A549 (cell line): ENCODE measurements at regions of chr2 and their contacts with region 1.

Region 1: DNA sequence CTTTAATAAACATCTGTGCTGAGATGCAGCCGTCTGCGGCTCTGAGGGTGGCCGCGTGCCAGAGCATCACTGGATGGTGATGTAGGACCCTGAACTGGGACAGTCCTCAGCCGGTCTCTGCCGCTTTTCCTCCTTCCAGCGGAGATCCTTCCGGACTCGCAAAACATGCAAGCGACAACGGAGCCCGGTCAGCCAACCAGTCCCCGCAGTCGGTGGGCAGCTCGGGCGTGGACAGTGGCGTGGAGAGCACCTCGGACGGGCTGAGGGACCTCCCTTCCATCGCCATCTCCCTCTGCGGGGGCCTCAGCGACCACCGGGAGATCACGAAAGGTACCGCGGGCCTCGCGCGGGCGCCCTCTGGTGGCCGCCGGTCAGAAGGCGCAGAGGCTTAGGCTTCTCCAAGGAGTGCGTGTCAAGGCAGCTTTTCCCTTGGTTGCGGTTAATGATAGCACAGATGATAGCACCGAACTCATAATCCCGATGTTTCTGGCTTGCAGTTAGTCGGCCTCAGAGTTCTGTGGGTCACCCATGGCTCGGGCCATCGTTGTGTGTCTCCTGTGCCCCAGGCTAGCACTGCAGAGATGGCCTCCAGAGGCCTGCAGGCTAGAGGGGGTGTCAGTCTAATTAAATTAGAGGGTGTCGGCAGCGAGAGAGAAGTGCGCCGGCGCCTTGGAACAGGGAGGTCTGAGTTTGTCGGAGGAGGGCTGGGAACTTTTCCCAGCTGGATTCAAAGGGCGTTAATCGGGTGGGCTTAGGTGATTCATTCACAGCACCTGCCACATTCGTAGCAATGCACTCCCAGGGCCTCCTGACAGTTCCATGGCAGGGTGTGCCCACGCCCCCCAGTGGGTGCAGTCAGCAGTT is 38.5 kb downstream of the LPIN1 start:
- DNase-seq: peak; percentile 34 to 65
- ATAC-seq: peak; percentile 70 to 96; a peak in 5 of 6 replicates
- H3K4me3 ChIP-seq: no peak overlapping the region
- H3K27ac ChIP-seq: no peak overlapping the region
- H3K4me1 ChIP-seq: no peaks in the 10 kb centered on the region
- CTCF ChIP-seq: peak; percentile 92
- EP300 ChIP-seq: no peak
- POLR2A ChIP-seq: no peak
- RAD21 ChIP-seq: peak; percentile 27 to 64; a peak in 4 of 5 replicates

Region 2: DNA sequence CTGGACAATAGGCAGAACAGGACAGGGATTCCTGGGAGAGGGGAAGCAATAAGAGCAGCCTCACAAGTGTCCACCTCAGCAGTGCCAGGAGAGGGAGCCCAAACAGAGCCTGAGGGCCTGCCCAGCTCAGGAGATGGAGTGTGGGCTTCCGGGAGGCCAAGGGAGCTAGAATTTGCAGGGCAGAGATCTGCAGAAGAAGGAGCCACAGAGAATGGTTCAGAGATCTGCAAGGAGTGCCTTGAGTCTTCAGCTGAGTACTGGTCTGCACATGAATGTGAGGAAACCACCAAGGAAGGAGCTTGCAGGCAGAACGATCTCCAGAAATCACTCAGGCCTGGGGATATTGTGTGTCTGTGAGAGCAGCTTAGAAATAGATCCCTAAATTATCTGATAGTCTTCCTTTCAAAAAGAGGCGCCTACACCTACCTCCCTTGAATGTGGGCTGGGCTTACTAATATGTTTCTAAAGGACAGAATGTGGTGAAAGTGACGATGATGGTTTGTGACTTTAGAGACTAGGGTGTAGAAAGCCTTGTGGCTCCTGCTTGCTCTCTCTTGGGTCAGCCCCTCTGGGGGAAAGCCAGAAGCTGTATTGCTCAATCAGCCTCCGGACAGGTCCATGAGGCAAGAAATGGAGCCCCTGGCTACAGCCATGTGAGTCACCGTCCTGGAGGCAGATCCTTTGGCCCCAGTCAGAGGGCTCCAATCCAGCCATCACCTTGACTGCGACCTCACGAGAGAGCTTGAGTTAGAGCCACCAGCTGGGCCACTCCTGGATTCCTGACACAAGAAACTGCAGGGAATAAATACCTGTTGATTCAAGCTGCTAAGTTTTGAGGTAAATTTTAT is 46.2 kb before region 1 on chr2:
- CTCF ChIA-PET with region 1: interaction called, 66 read pairs
- POLR2A ChIA-PET with region 1: no interaction called
- DNase-seq: peak; percentile 40 to 67
- ATAC-seq: peak; percentile 91 to 95
- H3K4me3 ChIP-seq: no peak overlapping the region
- H3K27ac ChIP-seq: peak overlapping the region; percentile 4 to 66; a peak in 4 of 6 replicates
- H3K4me1 ChIP-seq: peaks cover 27% of the 10 kb centered on the region
- CTCF ChIP-seq: peak; percentile 49
- EP300 ChIP-seq: no peak
- POLR2A ChIP-seq: no peak
- RAD21 ChIP-seq: peak; percentile 54 to 72

Region 3: DNA sequence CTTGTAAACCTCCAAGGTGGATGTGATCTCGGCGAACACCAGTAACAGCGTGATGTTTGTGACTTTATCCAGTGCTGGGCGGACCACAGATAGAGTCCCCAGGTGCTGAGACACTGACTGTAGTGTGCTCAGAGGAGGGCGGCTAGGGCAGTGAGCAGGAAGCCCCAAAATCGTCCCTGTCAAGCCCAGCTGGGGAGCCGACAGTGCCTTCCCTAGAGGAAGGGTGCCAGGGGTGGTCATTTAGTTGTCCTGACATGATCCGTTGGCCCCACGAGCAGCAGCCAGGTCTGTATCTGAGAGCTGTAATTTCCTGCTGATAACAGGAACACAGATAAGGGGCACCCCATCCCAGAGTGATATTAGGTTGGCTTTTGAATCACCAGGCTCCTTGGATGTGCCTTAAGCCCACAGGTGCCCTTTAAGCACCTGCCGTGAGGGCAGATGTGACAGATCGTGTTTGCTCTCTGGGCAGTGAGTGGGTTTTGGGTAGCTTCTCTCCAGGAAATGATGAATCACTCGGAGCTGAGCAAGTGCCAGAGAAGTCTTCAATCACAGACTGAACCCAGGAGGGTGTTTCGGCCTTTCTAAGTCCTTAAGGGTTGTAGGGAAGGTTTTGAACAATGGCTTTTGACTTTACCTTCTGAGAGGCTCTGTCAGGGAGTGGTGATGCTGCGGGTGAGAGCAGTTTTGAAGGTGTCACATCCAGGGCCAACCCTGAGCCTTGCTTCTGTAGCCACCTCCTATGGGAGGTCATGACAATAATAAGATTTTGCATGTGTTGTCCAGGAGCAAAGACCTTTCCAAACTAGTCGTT is 30.9 kb before region 1 on chr2:
- CTCF ChIA-PET with region 1: interaction called, 66 read pairs
- POLR2A ChIA-PET with region 1: no interaction called
- DNase-seq: peak; percentile 31 to 37
- ATAC-seq: peak; percentile 69 to 81
- H3K4me3 ChIP-seq: no peak overlapping the region
- H3K27ac ChIP-seq: peak overlapping the region in 1 of 2 experiments; percentile 11; a peak in 3 of 6 replicates
- H3K4me1 ChIP-seq: peaks cover 21% of the 10 kb centered on the region
- CTCF ChIP-seq: no peak
- EP300 ChIP-seq: no peak
- POLR2A ChIP-seq: no peak
- RAD21 ChIP-seq: no peak

Region 4: GRCh38 chr2:11771971-11772615 is 12.9 kb before region 1 on chr2:
- CTCF ChIA-PET with region 1: interaction called, 20 read pairs
- POLR2A ChIA-PET with region 1: no interaction called
- DNase-seq: no peak
- ATAC-seq: no peak
- H3K4me3 ChIP-seq: no peak overlapping the region
- H3K27ac ChIP-seq: no peak overlapping the region
- H3K4me1 ChIP-seq: no peaks in the 10 kb centered on the region
- CTCF ChIP-seq: no peak
- EP300 ChIP-seq: no peak
- POLR2A ChIP-seq: no peak
- RAD21 ChIP-seq: no peak

Region 5: DNA sequence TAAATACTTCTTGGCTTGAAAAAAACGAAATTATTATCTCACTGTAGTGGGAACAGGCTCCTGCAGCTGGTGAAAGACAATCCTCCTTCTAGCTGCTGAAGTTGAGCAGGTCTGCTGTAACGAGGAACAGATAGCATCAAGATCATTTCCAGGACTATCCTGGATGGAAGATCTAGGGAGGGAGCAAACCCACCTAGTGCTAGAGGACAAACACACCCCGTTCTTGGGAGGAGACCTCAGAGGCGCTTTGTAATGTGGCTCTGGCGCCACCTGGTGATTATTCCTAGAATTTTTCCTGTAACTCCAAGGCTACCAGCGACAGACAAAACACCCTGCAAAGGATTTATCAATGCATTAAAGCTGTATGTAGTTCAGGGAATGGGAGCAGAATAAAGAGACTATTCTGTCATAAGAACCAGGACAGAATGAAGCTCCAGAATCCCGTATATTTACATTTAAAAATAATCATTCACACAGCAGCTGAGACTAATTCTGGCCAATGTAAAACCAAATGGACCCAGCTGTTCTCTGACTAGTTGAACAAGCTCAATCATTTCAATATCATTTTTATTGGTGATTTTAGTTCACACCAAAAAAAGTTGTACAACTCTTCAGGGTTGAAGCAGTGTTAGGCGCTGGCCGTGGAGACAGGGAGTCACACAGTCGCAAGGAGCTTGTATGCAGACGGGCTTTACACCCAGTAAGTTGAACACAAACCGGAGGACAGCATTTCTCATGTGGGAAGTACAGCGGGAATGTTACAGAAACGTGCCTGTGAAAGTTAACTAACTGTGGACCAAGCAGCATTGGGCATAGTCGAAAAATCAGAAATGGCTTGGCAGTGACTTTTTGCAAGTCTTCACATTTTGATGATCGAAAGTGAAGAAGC is 1222.1 kb after region 1 on chr2:
- CTCF ChIA-PET with region 1: interaction called, 12 read pairs
- POLR2A ChIA-PET with region 1: no interaction called
- DNase-seq: peak; percentile 41 to 63
- ATAC-seq: peak; percentile 84 to 98
- H3K4me3 ChIP-seq: no peak overlapping the region
- H3K27ac ChIP-seq: no peak overlapping the region
- H3K4me1 ChIP-seq: no peaks in the 10 kb centered on the region
- CTCF ChIP-seq: peak; percentile 90
- EP300 ChIP-seq: no peak
- POLR2A ChIP-seq: no peak
- RAD21 ChIP-seq: peak; percentile 85 to 88